Activated CD4-positive, alpha-beta T cell treated with anti-CD3 and anti-CD28 coated beads for 36 hours (primary cell): ENCODE measurements at regions of chr11 and their contacts with region 1.

Region 1: DNA sequence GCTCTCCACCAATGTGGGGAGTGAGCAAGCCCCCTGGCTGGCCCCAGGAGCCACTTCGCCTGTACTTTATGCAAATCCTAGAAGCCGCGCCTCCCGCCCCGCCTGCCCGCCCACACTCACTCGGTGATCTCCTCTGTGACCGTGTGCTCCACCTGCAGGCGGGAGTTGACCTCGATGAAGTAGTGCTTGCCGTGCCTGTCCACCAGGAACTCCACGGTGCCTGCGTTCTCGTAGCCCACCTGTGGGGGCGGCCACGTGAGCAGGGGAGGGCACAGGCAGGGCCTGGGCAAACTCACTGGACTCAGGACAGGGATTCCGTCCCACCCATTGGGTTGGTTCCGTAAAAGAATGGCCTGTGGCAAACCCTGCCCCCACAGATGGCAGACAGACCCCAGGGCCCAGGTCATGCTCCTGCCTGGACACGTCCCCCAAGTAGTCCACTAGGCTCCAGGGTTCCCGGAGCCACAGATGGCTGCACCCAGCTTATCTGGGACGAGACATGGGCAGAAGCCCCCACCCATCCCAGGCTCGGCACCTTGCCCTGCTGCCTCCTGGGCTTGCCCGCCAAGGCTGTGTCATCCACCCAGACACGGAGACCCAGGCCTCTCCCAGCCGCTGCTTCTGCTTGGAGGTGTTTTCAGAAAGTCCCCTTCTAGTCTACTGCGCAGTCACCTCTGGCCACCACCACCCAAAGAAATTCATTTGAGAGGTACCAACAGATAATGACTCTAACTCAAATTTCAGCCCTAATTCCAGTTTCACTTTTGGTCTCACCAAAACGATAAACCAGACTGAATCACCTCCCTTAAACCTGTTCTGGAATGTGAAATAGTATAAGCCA is 12.1 kb downstream of the LRFN4 start:
- DNase-seq: peak; percentile 93
- ATAC-seq: peak; percentile 97
- H3K4me3 Mint-ChIP-seq: no peak overlapping the region
- H3K27ac Mint-ChIP-seq: peak overlapping the region; percentile 51
- H3K4me1 Mint-ChIP-seq: peaks cover 16% of the 10 kb centered on the region
- H3K27me3 Mint-ChIP-seq: no peaks in the 10 kb centered on the region

Region 2: GRCh38 chr11:66855574-66856495 is 13.1 kb before region 1 on chr11:
- CTCF ChIA-PET with region 1: interaction called, 3 read pairs
- POLR2A ChIA-PET with region 1: no interaction called
- intact Hi-C with region 1: loop called in 1 of 2 experiments (anchors 1 kb)
- DNase-seq: peak; percentile 94
- ATAC-seq: peak; percentile 83
- H3K4me3 Mint-ChIP-seq: peak overlapping the region; percentile 82
- H3K27ac Mint-ChIP-seq: peak overlapping the region; percentile 73
- H3K4me1 Mint-ChIP-seq: peaks cover 11% of the 10 kb centered on the region
- H3K27me3 Mint-ChIP-seq: no peaks in the 10 kb centered on the region

Region 3: GRCh38 chr11:66891851-66892660 is 23.1 kb after region 1 on chr11:
- CTCF ChIA-PET with region 1: no interaction called
- POLR2A ChIA-PET with region 1: no interaction called
- intact Hi-C with region 1: loop called in 1 of 2 experiments (anchors 1 kb)
- DNase-seq: peak; percentile 85
- ATAC-seq: peak; percentile 100
- H3K4me3 Mint-ChIP-seq: no peak overlapping the region
- H3K27ac Mint-ChIP-seq: peak overlapping the region; percentile 8
- H3K4me1 Mint-ChIP-seq: peaks cover 8% of the 10 kb centered on the region
- H3K27me3 Mint-ChIP-seq: no peaks in the 10 kb centered on the region